Endothelial cell of umbilical vein (primary cell): ENCODE measurements at regions of chr6 and their contacts with region 1.

Region 1: GRCh38 chr6:107318100-107318736 is 141.1 kb downstream of the PDSS2 start:
- DNase-seq: peak; percentile 69
- H3K4me3 ChIP-seq: no peak overlapping the region
- H3K27ac ChIP-seq: no peak overlapping the region
- H3K4me1 ChIP-seq: peaks cover 37% of the 10 kb centered on the region
- H3K27me3 ChIP-seq: no peaks in the 10 kb centered on the region
- CTCF ChIP-seq: peak; percentile 43 to 62
- POLR2A ChIP-seq: no peak

Region 2: GRCh38 chr6:107304421-107305025 is 13.7 kb before region 1 on chr6:
- CTCF ChIA-PET with region 1: interaction called, 10 read pairs
- POLR2A ChIA-PET with region 1: no interaction called
- dilution Hi-C with region 1: no loop called
- intact Hi-C with region 1: no loop called
- DNase-seq: no peak
- H3K4me3 ChIP-seq: no peak overlapping the region
- H3K27ac ChIP-seq: no peak overlapping the region
- H3K4me1 ChIP-seq: no peaks in the 10 kb centered on the region
- H3K27me3 ChIP-seq: no peaks in the 10 kb centered on the region
- CTCF ChIP-seq: no peak
- POLR2A ChIP-seq: no peak

Region 3: GRCh38 chr6:107408723-107409122 is 90.5 kb after region 1 on chr6:
- CTCF ChIA-PET with region 1: interaction called, 22 read pairs
- POLR2A ChIA-PET with region 1: no interaction called
- dilution Hi-C with region 1: no loop called
- intact Hi-C with region 1: no loop called
- DNase-seq: peak; percentile 57
- H3K4me3 ChIP-seq: no peak overlapping the region
- H3K27ac ChIP-seq: no peak overlapping the region
- H3K4me1 ChIP-seq: peaks cover 7% of the 10 kb centered on the region
- H3K27me3 ChIP-seq: no peaks in the 10 kb centered on the region
- CTCF ChIP-seq: no peak
- POLR2A ChIP-seq: no peak

Region 4: DNA sequence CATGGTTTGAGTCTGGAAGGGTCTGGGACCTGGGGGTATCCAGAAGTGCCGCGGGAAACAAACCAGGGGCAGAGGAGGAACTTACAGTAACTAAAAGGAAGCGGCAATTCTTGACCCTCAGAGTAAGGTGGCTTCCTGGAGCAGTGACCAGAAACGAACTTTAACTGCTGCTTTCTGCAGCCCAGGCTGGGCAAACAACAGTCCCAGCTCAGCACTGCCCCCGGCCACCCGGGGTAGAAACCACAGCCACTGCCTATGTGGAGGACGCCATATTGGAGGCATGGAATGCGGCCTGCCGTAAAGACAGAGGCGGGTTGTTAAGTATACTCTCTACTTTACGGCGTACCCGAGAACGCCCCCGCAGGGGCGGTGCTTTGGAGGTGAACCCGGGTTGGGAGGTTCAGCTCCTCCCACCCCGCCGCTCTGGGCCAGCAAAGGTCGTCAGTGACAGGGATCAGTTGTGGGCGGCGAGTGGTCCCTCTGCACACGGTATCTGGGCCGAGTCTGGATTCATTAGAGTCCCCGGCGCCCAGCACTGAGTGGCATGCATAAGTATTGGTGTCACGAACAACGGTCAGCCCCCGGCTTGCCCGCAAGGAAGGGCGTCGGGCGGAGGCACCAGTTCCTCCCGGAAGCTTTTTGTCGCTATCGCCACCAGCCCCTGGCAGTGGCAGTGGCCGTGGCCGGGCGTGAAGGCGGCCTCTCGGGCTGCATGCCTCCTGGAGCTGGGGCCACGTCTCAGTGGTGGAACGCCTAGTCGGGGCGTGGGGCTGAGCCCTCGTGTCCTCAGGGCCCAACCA is 141.3 kb after region 1 on chr6 and contains the start of gene PDSS2:
- CTCF ChIA-PET with region 1: interaction called, 55 read pairs
- POLR2A ChIA-PET with region 1: interaction called, 3 read pairs
- dilution Hi-C with region 1: no loop called
- intact Hi-C with region 1: loop called (anchors 1 kb)
- DNase-seq: peak; percentile 96
- H3K4me3 ChIP-seq: peak within 1 kb of the TSS; percentile 75 to 90 (median 81)
- H3K27ac ChIP-seq: peak within 1 kb of the TSS; percentile 22
- H3K4me1 ChIP-seq: peaks cover 4% of the 10 kb centered on the region
- H3K27me3 ChIP-seq: no peaks in the 10 kb centered on the region
- CTCF ChIP-seq: peak; percentile 65 to 66
- POLR2A ChIP-seq: peak; percentile 88
- total RNA-seq, gene PDSS2: 9.3 and 10.6 TPM in 2 replicates

Region 5: DNA sequence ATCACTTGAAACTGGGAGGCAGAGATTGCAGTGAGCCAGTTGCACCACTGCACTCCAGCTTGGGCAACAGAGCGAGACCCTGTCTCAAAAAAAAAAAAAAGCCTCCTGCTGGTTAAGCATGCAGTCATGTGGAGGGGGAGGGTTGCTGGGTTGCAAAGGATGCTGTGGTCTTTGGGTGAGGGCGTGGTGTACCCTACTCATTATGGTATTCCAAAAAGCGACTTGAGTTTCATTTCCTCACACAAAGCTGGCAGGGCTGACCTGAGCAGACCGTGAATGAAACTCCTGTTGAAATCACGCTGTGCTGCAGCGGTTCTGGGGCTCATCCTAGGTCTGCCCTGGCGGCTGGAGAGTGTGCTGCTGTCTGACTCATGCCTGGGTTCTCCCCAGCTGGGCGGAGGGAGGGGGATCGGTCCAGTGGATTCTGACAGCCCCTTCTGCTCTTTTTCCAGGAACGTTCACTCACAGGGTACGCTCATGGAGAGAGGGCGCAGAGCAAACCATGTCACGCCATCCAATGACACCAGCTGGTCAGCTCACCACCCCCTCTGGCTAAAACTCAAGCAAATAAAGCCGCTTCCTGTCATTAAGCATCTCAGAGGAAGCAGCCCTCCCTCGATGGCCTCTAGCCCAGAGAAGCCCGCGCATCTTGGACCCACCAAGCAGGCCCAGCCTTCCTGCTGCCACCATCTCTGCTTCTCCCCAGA is 339.7 kb after region 1 on chr6:
- CTCF ChIA-PET with region 1: interaction called, 9 read pairs
- POLR2A ChIA-PET with region 1: no interaction called
- dilution Hi-C with region 1: no loop called
- intact Hi-C with region 1: loop called (anchors 1 kb)
- DNase-seq: peak; percentile 79
- H3K4me3 ChIP-seq: peak overlapping the region; percentile 5 to 33 (median 11)
- H3K27ac ChIP-seq: peak overlapping the region; percentile 48
- H3K4me1 ChIP-seq: peaks cover 23% of the 10 kb centered on the region
- H3K27me3 ChIP-seq: no peaks in the 10 kb centered on the region
- CTCF ChIP-seq: peak; percentile 17 to 58
- POLR2A ChIP-seq: no peak

Region 6: GRCh38 chr6:107704347-107705013 is 386.3 kb after region 1 on chr6:
- CTCF ChIA-PET with region 1: interaction called, 5 read pairs
- POLR2A ChIA-PET with region 1: no interaction called
- dilution Hi-C with region 1: no loop called
- intact Hi-C with region 1: loop called (anchors 2 kb)
- DNase-seq: peak; percentile 58
- H3K4me3 ChIP-seq: no peak overlapping the region
- H3K27ac ChIP-seq: no peak overlapping the region
- H3K4me1 ChIP-seq: no peaks in the 10 kb centered on the region
- H3K27me3 ChIP-seq: peaks cover 10 to 14% of the 10 kb centered on the region in 2 experiments
- CTCF ChIP-seq: peak; percentile 60 to 68
- POLR2A ChIP-seq: no peak